ENCODE measurements at regions of chr2 and their contacts with region 1.

Region 1: DNA sequence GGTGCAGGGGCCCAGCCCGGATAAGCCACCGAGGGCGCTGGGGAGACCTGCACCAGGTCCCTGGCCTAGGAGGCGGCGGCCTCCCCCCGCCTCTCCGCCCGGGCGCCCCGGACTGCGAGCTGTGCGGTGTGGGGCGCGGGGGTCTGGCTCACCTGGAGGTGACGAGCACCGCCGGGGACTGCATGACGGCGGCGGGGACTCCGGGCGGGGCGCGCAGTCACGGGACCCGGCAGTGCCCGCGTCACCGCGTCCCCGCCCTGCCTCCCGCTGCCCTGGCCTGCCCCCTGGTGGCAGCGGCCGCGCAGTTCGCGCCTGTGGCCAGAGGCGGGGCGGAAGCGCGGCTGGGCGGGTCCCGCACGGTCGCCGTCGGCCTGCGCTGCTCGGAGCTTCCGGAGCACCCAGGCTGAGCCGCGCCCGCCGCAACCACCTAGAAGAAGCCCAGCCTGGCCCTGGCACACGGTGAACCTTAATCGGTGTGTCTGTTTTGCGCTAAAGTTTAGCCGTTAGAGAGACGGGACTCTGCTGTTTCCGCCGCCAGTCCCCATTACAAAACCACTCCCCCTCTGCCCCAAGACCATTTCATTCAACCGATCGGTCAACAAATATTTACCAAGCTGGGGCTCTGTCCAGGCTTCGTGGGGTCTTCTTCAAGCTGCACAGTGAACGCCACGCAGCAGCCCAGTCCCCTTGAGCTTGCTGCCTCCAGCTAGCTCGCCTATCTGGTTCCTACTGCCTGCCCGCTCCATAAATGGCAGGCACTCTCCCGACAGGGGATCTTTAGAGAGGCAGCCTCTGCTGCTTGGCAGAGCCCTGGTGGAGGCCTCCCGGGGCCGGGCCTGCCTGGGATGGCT is at the start of gene HS1BP3:
- DNase-seq: no peak
- H3K4me3 ChIP-seq: peak within 1 kb of the TSS; percentile 92
- H3K27ac ChIP-seq: peak within 1 kb of the TSS; percentile 3
- H3K27me3 ChIP-seq: peaks cover 15% of the 10 kb centered on the region
- CTCF ChIP-seq: peak; percentile 54
- polyA plus RNA-seq, gene HS1BP3: 14.2 and 16.1 TPM in 2 replicates

Region 2: DNA sequence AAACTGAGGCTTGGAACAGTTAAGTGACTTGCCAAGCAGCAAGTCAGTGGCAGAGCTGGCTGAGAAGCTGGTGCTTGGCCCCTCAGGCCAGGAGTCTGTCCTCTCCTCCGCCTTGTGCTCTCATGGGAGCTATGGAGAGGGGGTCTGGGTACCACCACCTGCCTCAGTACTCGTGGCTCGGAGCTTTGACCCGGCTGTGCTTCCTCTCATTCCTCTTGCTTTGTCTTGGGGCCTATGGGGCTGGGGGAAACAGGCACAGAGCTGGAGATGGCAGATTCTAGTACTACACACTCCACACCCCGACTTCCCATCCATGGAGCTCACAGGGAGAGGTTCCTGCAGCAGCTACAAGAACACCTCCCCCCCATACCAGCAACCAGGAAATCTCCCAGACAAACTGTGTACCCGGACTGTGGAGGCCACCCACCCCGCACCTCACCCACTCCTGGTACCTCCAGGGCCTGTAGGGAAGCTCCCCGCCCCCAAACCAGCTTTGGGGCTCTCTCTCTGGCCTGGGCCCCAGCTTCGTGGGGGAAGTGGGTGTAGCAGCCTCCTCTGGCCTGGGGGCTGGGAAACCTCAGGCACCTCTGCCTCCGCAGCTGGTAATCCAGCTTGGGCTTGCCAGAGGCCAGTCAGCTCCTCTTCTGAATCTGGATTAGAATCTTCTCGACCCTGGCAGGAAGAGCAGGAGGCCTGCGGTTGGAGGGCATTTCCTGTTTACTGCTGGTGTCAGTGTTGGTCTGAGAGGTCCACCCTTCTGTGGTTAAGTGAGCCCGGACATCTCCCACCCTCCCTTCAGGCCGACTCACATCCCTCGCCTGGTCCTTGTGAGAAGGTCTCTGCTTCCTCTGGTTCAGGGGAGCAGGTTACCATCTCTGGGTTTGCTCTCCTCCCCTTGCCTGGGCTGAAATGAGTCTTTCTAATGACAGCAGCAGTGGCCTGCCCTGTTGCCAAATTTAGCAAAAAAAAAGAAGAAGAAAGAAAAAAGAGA is 226.5 kb before region 1 on chr2:
- CTCF ChIA-PET with region 1: interaction called, 10 read pairs
- POLR2A ChIA-PET with region 1: no interaction called
- DNase-seq: peak; percentile 81
- H3K4me3 ChIP-seq: no peak overlapping the region
- H3K27ac ChIP-seq: no peak overlapping the region
- H3K27me3 ChIP-seq: no peaks in the 10 kb centered on the region
- CTCF ChIP-seq: no peak